ENCODE measurements at regions of chr11 and their contacts with region 1.

Region 1: DNA sequence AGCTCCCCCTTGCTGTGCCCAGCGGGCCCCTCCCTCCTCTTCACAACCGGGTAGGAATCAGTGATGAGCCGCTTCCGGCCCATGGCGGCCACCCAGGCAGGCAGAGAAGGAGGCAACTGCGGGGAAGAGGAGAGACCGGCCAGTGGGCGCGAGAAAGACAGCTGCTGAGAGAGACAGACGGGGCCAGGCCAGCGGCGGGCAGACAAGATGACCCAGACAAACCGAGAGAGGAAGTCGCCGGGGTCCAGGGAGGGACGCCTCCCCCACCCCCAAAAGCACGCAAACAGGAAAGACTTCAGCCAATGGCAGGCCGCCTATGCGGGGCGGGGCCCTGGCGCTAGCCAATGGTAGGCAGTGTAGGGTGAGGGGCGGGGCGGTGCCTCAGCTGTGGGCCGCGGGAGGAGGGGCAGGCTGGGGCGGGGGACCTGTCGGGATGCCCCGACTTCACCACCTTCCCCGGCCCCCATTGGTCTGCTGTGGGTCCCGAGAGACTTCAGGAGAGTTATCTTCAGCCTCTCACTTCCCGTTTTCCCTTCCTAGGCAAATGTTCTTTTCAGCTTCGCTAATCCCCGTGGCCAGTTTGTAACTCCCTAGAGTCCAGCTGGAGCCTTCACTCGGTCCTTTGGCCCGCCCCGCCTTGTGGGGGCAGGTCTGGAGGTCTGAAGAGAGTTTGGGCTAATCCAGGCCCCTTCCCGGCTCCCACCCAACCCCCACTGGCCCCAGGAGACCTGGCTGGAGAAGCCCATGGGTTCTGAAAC is at the start of gene POLD4:
- DNase-seq: peak; percentile 98
- ATAC-seq: peak; percentile 91
- H3K4me3 Mint-ChIP-seq: peak within 1 kb of the TSS; percentile 95
- H3K27ac Mint-ChIP-seq: peak within 1 kb of the TSS; percentile 99
- H3K4me1 Mint-ChIP-seq: peaks cover 49% of the 10 kb centered on the region
- H3K27me3 Mint-ChIP-seq: no peaks in the 10 kb centered on the region
- total RNA-seq, gene POLD4: 31.3 to 37.5 TPM

Region 2: DNA sequence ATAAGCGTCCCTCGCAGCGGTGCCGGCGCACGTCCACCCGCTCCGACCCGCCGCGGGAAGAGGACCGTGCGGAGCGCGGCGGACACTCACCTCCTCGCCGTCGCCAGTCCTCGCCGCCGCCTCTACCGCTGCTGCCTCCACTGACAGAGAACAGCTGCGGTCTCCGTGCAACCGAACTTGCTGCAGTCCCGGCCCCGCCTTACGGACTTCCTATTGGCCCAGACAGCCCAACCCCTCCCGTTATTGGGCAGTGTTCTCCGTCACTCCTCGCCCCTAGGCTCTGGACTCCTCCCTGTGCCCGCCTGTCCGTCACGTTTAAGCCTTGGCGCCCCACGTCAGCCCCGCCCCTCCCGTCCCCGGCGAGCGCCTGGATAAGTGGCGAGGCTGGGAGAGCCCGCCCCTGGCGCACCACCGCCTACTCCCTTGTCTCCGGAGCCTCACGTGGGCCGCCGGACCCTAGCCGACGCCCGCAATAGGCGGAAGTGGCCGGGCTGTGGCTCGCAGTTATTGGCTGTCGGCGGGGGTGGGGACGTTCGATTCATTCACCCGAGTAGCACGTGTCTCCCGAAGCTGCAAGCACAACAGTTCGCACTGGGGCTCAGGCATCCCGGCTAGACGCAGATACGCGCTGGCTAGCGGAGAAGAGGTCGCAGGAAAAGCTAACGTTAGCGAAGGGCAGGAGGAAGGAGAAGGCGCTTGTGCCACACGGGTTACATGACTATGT is 395.1 kb before region 1 on chr11 and contains the start of gene PC:
- CTCF ChIA-PET with region 1: no interaction called
- POLR2A ChIA-PET with region 1: no interaction called
- intact Hi-C with region 1: loop called in 1 of 2 experiments (anchors 1 kb)
- DNase-seq: peak; percentile 99
- ATAC-seq: peak; percentile 98
- H3K4me3 Mint-ChIP-seq: peak within 1 kb of the TSS; percentile 78
- H3K27ac Mint-ChIP-seq: peak within 1 kb of the TSS; percentile 90
- H3K4me1 Mint-ChIP-seq: peaks cover 18% of the 10 kb centered on the region
- H3K27me3 Mint-ChIP-seq: no peaks in the 10 kb centered on the region
- total RNA-seq, gene PC: 9.2 to 9.3 TPM

Region 3: GRCh38 chr11:67126986-67127385 is 226.5 kb before region 1 on chr11:
- CTCF ChIA-PET with region 1: no interaction called
- POLR2A ChIA-PET with region 1: no interaction called
- intact Hi-C with region 1: no loop called
- DNase-seq: no peak
- ATAC-seq: no peak
- H3K4me3 Mint-ChIP-seq: no peak overlapping the region
- H3K27ac Mint-ChIP-seq: no peak overlapping the region
- H3K4me1 Mint-ChIP-seq: peaks cover 19% of the 10 kb centered on the region
- H3K27me3 Mint-ChIP-seq: no peaks in the 10 kb centered on the region

Region 4: DNA sequence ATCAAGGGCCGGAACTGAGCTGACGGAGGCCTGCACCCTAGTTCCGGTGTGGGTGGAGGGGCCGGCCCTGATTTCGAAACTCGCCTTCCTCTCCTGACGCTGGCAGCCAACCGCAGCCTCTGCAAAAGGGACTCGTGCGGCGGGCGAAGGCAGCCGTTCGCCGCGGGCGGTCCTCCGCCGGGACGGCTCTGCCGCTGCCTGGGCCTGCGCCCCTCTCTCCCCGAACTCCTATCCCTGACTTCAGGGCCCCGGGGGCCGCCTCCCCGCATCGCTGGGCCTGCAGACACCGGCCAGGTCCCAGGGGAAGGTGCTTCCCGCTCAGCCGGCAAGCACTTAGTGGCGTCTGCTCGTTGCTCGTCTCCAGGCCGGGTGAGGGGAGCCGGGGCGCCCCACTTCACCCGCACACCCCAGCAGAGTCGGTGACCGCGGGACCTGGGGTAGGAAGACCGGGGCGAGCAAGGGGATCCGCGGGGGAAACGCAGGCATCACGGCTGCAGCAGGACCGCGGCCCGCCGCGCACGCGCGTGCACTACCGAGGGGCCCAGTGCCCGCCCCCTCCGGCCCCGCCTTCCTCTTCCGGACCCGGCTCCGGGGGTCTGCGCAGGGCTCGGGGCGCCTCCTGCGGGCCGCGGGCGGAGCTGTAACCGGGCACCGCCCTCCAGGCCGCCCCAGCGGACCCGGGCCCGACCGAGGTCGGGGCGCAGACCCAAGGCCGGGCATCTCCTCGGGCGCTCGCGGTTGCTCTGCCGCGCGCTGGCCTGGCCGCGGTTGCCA is 64.9 kb before region 1 on chr11:
- CTCF ChIA-PET with region 1: interaction called, 3 read pairs
- POLR2A ChIA-PET with region 1: no interaction called
- intact Hi-C with region 1: loop called in 1 of 2 experiments (anchors 1 kb)
- DNase-seq: peak; percentile 95
- ATAC-seq: peak; percentile 62
- H3K4me3 Mint-ChIP-seq: peak overlapping the region; percentile 64
- H3K27ac Mint-ChIP-seq: peak overlapping the region; percentile 97
- H3K4me1 Mint-ChIP-seq: peaks cover 56% of the 10 kb centered on the region
- H3K27me3 Mint-ChIP-seq: no peaks in the 10 kb centered on the region

Region 5: GRCh38 chr11:67382276-67383136 is 29.0 kb after region 1 on chr11:
- CTCF ChIA-PET with region 1: interaction called, 445 read pairs
- POLR2A ChIA-PET with region 1: interaction called, 3 read pairs
- intact Hi-C with region 1: loop called (anchors 1 kb)
- DNase-seq: peak; percentile 90
- ATAC-seq: peak; percentile 97
- H3K4me3 Mint-ChIP-seq: no peak overlapping the region
- H3K27ac Mint-ChIP-seq: no peak overlapping the region
- H3K4me1 Mint-ChIP-seq: peaks cover 2% of the 10 kb centered on the region
- H3K27me3 Mint-ChIP-seq: no peaks in the 10 kb centered on the region

Region 6: GRCh38 chr11:67468835-67469811 is 115.6 kb after region 1 on chr11 and contains the start of gene TMEM134:
- CTCF ChIA-PET with region 1: interaction called, 3 read pairs
- POLR2A ChIA-PET with region 1: no interaction called
- intact Hi-C with region 1: loop called in 1 of 2 experiments (anchors 1 kb)
- DNase-seq: peak; percentile 97
- ATAC-seq: peak; percentile 78
- H3K4me3 Mint-ChIP-seq: peak within 1 kb of the TSS; percentile 82
- H3K27ac Mint-ChIP-seq: peak within 1 kb of the TSS; percentile 86
- H3K4me1 Mint-ChIP-seq: peaks cover 23% of the 10 kb centered on the region
- H3K27me3 Mint-ChIP-seq: no peaks in the 10 kb centered on the region
- total RNA-seq, gene TMEM134: 69.9 to 74.7 TPM

Region 7: DNA sequence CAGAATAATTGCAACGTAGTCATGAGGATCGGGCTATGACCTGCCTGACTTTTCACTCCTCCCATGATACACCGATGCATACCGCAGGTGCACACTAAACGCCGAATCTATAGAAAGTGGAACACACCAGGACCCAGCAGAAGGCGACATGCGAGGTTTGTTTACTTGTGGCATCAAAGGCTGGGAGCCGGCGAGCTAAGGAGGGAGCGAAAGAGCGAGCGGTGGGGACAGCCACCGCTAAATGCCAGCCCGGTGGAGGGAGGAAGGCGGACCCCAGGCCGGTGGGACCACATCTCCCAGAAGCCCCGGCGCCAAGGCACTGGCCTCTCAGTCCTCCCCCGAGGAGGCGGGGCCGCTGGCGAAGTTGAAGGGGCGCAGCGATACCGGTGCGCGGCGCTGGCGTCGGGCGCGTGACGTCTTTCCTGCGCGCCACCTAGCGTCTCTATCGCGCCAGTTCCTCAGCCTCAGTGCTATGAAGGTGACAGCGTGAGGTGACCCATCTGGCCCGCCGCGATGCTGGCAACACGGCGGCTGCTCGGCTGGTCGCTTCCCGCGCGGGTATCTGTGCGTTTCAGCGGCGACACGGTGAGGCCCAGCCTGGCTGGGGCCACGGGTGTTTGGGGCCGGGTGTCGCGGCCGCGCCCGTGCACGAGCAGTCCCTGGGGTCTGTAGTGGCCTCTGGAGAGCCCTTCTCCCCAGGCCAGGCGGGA is 253.2 kb after region 1 on chr11 and contains the start of gene NDUFV1:
- CTCF ChIA-PET with region 1: no interaction called
- POLR2A ChIA-PET with region 1: no interaction called
- intact Hi-C with region 1: loop called in 1 of 2 experiments (anchors 1 kb)
- DNase-seq: peak; percentile 98
- ATAC-seq: peak; percentile 100
- H3K4me3 Mint-ChIP-seq: peak within 1 kb of the TSS; percentile 92
- H3K27ac Mint-ChIP-seq: peak within 1 kb of the TSS; percentile 90
- H3K4me1 Mint-ChIP-seq: peaks cover 16% of the 10 kb centered on the region
- H3K27me3 Mint-ChIP-seq: peaks cover 9% of the 10 kb centered on the region
- total RNA-seq, gene NDUFV1: 253 to 287 TPM

Region 8: DNA sequence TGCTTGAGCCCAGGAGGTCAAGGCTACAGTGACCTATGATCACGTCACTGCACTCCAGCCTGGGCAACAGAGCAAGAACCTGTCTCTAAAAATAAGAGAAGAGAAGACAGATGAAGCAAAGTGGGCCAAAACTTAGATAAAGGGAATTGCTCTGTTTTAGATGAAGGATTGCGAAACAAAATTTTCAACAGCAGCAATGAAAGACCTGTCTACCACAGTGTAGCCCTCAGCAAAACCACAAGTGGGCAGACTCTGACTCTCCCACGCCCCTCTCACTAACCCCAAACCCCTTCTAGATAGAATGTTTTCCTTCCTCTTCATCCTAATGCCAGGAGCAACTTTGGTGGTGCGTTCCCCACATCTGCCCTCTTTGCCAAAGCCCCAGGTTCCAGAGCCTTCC is 426.6 kb after region 1 on chr11:
- CTCF ChIA-PET with region 1: no interaction called
- POLR2A ChIA-PET with region 1: no interaction called
- intact Hi-C with region 1: no loop called
- DNase-seq: no peak
- ATAC-seq: no peak
- H3K4me3 Mint-ChIP-seq: no peak overlapping the region
- H3K27ac Mint-ChIP-seq: no peak overlapping the region
- H3K4me1 Mint-ChIP-seq: no peaks in the 10 kb centered on the region
- H3K27me3 Mint-ChIP-seq: peaks cover 8% of the 10 kb centered on the region